ENCODE measurements at regions of chr13 and their contacts with region 1.

Region 1: GRCh38 chr13:80454245-80454644 is 113.3 kb upstream of the SPRY2 start:
- DNase-seq: no peak
- H3K4me3 ChIP-seq: no peak overlapping the region
- H3K27ac ChIP-seq: no peak overlapping the region
- H3K4me1 ChIP-seq: no peaks in the 10 kb centered on the region
- H3K27me3 ChIP-seq: no peaks in the 10 kb centered on the region
- CTCF ChIP-seq: no peak

Region 2: GRCh38 chr13:80436571-80437169 is 17.6 kb before region 1 on chr13:
- CTCF ChIA-PET with region 1: interaction called, 15 read pairs
- POLR2A ChIA-PET with region 1: no interaction called
- intact Hi-C with region 1: no loop called
- DNase-seq: no peak
- H3K4me3 ChIP-seq: no peak overlapping the region
- H3K27ac ChIP-seq: no peak overlapping the region
- H3K4me1 ChIP-seq: no peaks in the 10 kb centered on the region
- H3K27me3 ChIP-seq: no peaks in the 10 kb centered on the region
- CTCF ChIP-seq: no peak

Measured in PC-9 (cell line).